Endothelial cell of umbilical vein (primary cell): ENCODE measurements at regions of chr7 and their contacts with region 1.

Region 1: DNA sequence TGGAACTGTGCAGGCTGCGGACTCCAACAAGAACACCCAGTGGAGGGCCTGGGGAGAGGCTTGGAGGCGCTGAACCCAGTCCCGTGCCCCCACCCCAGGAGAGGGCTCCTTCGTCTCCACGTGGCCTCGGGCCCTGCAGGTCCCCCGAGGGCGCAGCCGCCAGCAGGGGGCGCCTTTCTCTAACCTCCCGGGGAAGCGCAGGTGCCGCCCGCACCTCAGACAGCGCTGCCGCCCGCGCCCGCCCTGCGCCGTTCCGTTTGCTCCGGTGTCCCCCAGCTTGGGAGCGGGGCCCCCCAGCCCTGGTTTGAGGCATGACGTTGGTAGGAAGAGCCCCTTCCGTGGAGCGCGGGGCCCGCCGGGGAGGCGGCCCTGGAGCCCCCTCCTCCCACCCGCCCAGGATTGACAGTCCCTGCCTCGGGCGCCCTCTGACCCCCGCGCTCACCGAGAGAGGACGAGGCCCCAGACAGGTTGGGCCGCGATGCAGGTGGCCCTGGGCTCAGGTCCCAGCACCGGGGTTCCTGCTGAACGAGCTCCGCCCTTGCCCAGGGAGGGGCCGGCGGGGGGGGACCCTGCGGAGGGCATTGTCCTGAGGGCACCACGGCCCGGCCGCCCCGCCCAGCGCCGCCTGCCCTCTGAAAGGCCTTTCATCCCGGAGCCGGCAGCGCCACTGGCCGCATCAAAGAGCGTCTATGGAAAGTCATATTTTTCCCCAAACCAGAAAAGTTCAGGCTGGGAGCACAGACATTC is 42.8 kb downstream of the FOXL3 start:
- DNase-seq: peak; percentile 56
- H3K4me3 ChIP-seq: peak overlapping the region in 2 of 3 experiments; percentile 6 to 26
- H3K27ac ChIP-seq: no peak overlapping the region
- H3K4me1 ChIP-seq: no peaks in the 10 kb centered on the region
- H3K27me3 ChIP-seq: peaks cover 0 to 2% of the 10 kb centered on the region in 2 experiments
- CTCF ChIP-seq: peak; percentile 84 to 97
- POLR2A ChIP-seq: no peak

Region 2: GRCh38 chr7:351681-352480 is 19.1 kb after region 1 on chr7:
- CTCF ChIA-PET with region 1: no interaction called
- POLR2A ChIA-PET with region 1: no interaction called
- dilution Hi-C with region 1: no loop called
- intact Hi-C with region 1: no loop called
- DNase-seq: no peak
- H3K4me3 ChIP-seq: no peak overlapping the region
- H3K27ac ChIP-seq: peak overlapping the region; percentile 19
- H3K4me1 ChIP-seq: peaks cover 23% of the 10 kb centered on the region
- H3K27me3 ChIP-seq: no peaks in the 10 kb centered on the region
- CTCF ChIP-seq: no peak
- POLR2A ChIP-seq: no peak

Region 3: DNA sequence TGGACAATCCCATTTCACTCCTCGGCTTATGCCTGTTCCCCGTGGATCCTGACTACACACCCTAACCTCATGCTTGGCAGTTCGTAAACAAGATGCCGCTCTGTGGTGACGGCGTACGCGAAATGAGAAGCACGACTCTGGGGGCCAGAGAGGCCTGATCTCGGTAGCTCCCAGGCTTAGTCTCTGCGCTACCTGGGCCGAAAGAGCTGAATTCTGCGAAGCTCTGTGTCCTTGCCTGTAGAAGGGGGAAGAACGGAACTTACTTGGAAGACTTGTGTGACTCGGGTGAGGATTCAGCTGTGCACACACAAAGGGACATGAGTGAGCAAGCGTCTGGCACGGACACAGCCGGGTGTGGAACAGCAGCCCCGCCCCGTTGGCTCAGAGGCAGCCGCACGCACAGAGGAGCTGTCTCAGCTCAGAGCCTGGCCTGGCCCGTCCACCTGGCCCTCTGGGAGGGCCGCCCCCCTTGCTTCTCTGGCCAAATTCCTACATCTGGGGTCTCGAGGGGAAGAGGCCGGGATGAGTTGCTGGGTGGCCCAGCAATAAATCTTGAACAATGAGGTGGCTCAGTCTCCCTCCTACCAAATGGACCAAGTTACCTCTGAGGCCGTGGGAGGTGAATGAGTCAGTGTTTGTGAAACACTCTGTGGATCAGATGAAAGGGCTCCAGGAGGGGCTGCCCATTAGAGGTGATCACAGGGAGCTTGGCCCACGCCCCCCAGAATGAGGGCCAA is 103.0 kb after region 1 on chr7:
- CTCF ChIA-PET with region 1: interaction called, 11 read pairs
- POLR2A ChIA-PET with region 1: interaction called, 3 read pairs
- dilution Hi-C with region 1: no loop called
- intact Hi-C with region 1: no loop called
- DNase-seq: peak; percentile 38
- H3K4me3 ChIP-seq: no peak overlapping the region
- H3K27ac ChIP-seq: no peak overlapping the region
- H3K4me1 ChIP-seq: peaks cover 8% of the 10 kb centered on the region
- H3K27me3 ChIP-seq: no peaks in the 10 kb centered on the region
- CTCF ChIP-seq: no peak
- POLR2A ChIP-seq: no peak

Region 4: GRCh38 chr7:460374-461116 is 127.7 kb after region 1 on chr7:
- CTCF ChIA-PET with region 1: interaction called, 14 read pairs
- POLR2A ChIA-PET with region 1: no interaction called
- dilution Hi-C with region 1: no loop called
- intact Hi-C with region 1: no loop called
- DNase-seq: peak; percentile 53
- H3K4me3 ChIP-seq: no peak overlapping the region
- H3K27ac ChIP-seq: peak overlapping the region; percentile 66
- H3K4me1 ChIP-seq: peaks cover 38% of the 10 kb centered on the region
- H3K27me3 ChIP-seq: no peaks in the 10 kb centered on the region
- CTCF ChIP-seq: no peak
- POLR2A ChIP-seq: no peak

Region 5: DNA sequence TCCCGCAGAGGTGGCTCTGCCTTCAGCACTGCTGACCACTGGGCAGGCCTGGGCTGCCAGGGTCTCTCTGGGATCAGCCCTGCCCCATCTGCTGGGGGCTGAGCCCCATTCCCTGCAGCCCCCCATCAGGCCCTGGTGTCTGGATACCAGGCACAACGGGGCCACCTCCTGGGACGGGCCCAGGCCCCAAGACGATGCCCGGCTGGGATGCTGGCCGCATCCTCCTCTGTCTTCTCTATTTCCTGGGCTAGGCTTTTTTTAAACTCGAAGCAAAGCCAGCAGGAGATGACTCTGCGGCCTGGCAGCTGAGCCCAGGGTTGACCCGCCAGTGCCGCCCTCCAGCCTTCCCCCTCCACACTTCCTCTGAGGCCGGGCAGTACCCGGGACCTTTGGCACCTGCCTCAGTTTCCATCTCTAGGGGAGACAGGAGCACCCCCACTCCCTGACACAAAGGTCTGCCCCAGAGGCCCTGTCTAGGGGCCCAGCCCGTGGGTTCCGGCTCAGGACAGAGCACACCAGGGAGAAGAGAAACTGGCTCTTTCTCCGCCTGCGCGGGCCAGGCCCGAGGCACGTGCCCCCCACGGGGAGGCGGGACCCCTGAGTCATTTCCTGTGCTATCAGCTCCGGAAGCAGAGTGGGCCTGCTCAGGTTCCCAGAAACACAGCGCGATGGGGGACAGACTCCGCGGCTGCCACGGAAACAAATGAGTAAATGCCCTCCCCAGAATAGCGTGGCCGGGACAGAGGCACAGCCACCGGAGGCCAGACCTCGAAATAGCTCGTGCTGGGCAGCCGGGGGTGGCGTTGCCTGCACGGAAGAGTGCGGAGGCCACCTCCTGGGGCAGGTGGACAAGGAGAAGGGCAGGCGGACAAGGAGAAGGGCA is 271.4 kb after region 1 on chr7:
- CTCF ChIA-PET with region 1: interaction called, 3 read pairs
- POLR2A ChIA-PET with region 1: no interaction called
- dilution Hi-C with region 1: no loop called
- intact Hi-C with region 1: loop called (anchors 1 kb)
- DNase-seq: peak; percentile 93
- H3K4me3 ChIP-seq: no peak overlapping the region
- H3K27ac ChIP-seq: peak overlapping the region; percentile 97
- H3K4me1 ChIP-seq: peaks cover 60% of the 10 kb centered on the region
- H3K27me3 ChIP-seq: no peaks in the 10 kb centered on the region
- CTCF ChIP-seq: no peak
- POLR2A ChIP-seq: no peak

Region 6: GRCh38 chr7:620052-620451 is 287.2 kb after region 1 on chr7:
- CTCF ChIA-PET with region 1: no interaction called
- POLR2A ChIA-PET with region 1: no interaction called
- dilution Hi-C with region 1: no loop called
- intact Hi-C with region 1: no loop called
- DNase-seq: peak; percentile 85
- H3K4me3 ChIP-seq: no peak overlapping the region
- H3K27ac ChIP-seq: peak overlapping the region; percentile 41
- H3K4me1 ChIP-seq: peaks cover 15% of the 10 kb centered on the region
- H3K27me3 ChIP-seq: no peaks in the 10 kb centered on the region
- CTCF ChIP-seq: no peak
- POLR2A ChIP-seq: no peak

Region 7: DNA sequence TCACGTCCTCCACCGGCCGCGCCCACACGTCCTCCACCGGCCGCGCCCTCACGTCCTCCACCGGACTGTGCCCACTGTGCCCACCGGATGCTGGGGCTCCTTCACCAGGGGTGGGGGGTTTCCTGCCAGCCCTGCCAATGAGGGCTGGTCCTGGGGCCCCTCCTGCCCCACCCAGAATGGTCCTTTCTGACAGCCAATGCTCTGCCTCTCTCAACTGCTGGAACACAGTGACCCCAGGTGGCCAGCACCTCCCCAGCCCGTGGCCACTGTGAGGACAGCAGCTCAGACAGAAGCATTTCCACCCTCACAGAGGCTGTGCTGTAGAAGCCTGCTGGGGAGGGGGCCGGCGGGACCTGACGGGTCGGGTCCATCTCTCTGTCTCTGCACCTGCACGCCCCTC is 303.6 kb after region 1 on chr7:
- CTCF ChIA-PET with region 1: interaction called, 24 read pairs
- POLR2A ChIA-PET with region 1: no interaction called
- dilution Hi-C with region 1: no loop called
- intact Hi-C with region 1: loop called (anchors 1 kb)
- DNase-seq: no peak
- H3K4me3 ChIP-seq: no peak overlapping the region
- H3K27ac ChIP-seq: no peak overlapping the region
- H3K4me1 ChIP-seq: no peaks in the 10 kb centered on the region
- H3K27me3 ChIP-seq: no peaks in the 10 kb centered on the region
- CTCF ChIP-seq: peak; percentile 47 to 51
- POLR2A ChIP-seq: no peak

Region 8: GRCh38 chr7:732094-732541 is 399.3 kb after region 1 on chr7:
- CTCF ChIA-PET with region 1: interaction called, 5 read pairs
- POLR2A ChIA-PET with region 1: no interaction called
- dilution Hi-C with region 1: no loop called
- intact Hi-C with region 1: loop called (anchors 5 kb)
- DNase-seq: peak; percentile 36
- H3K4me3 ChIP-seq: no peak overlapping the region
- H3K27ac ChIP-seq: no peak overlapping the region
- H3K4me1 ChIP-seq: peaks cover 8% of the 10 kb centered on the region
- H3K27me3 ChIP-seq: no peaks in the 10 kb centered on the region
- CTCF ChIP-seq: peak; percentile 12 to 49
- POLR2A ChIP-seq: no peak

Region 9: DNA sequence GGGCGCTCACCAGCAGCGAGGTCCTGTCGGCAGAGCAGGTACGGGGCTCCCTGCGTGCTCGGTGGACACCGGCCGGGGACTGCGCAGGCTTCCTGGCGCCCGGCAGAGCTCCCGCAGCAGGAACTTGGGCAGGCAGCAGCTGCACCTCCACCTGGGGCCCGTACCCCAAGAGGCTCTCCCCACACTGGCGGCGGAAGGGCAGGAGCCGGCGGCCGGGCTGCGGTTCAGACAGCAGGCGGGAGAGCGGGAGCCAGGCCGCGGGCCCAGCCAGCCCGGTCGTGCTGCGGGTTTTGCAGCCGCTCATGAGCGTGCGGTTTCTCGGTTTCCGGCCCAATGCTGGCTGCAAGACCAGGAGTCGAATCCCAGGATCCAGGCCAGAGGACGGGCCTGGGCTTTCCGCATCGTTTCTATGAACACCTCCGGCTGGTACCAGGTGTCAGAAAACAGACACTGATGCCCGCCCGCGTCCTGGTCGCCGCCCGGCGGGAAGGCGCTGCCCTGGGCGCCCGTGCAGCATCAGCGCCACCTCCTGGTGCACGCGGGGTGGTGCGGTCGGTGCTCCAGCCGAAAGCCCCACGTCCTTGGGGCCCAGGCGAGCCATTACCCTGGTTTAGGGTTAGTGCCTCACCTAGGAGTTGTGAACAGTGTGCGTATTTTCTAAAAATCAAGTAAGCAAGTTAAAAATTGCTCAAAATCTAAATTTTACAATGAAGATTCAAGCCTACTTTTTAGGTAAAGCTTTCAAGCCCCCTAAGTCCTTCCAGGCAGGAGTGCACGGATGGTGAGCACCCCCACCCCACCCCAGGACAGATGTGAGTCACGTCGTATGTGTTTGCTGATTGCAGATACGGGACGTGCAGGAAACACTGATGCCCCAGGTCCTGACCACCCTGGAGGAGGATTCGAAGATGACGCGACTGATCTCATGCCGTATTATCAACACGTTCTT is 441.6 kb after region 1 on chr7:
- CTCF ChIA-PET with region 1: interaction called, 7 read pairs
- POLR2A ChIA-PET with region 1: no interaction called
- dilution Hi-C with region 1: no loop called
- intact Hi-C with region 1: loop called (anchors 1 kb)
- DNase-seq: peak; percentile 34
- H3K4me3 ChIP-seq: no peak overlapping the region
- H3K27ac ChIP-seq: no peak overlapping the region
- H3K4me1 ChIP-seq: peaks cover 39% of the 10 kb centered on the region
- H3K27me3 ChIP-seq: no peaks in the 10 kb centered on the region
- CTCF ChIP-seq: peak; percentile 91 to 93
- POLR2A ChIP-seq: no peak